Heart right ventricle (tissue), 16 donors: ENCODE measurements at regions of chr14 and their contacts with region 1.

Region 1: DNA sequence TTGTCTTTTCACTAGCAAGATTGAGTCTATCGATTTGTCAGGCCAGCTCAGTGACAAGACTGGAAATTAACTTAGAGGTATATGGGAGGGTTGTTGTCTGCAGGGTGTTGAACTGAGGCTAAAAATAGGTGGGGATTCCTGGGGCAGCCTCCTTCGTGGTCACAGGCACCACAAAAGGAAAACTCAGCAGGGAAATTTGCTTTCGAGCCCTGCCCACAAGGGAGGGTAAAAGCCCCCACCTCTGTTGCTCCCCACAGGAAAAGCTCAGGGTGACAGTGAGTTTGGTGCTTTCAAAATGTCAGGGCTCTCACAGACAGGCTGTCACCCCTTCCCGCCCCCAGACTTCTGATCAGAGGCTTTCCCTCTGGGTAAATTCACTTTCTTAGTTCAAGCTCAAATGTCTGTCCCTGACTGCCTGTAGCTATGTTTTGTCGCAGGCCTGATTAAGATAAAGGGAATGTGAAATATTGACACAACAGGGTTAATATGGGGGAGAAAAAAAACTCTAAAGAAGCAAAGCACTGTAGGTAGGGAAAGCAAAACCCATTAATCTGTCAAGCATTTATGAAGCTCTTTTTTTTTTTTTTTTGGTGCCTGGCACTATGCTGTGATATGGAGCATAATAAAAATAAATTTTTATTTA is 11.7 kb upstream of the NFKBIA start:
- DNase-seq: no peak
- ATAC-seq: no peak
- H3K4me3 ChIP-seq: no peak overlapping the region
- H3K27ac ChIP-seq: peak overlapping the region in 4 of 10 donors; percentile 23 to 75 (median 32)
- H3K4me1 ChIP-seq: peaks cover 4 to 49% (median 36%) of the 10 kb centered on the region in 9 donors
- H3K27me3 ChIP-seq: no peaks in the 10 kb centered on the region
- CTCF ChIP-seq: no peak

Region 2: GRCh38 chr14:34331728-34332623 is 1084.3 kb before region 1 on chr14:
- intact Hi-C with region 1: loop called in 1 of 10 experiments (anchors 10 kb)
- DNase-seq: peak; percentile 43 to 48
- ATAC-seq: peak; percentile 67 to 85 (median 76)
- H3K4me3 ChIP-seq: no peak overlapping the region
- H3K27ac ChIP-seq: no peak overlapping the region
- H3K4me1 ChIP-seq: peaks cover 0 to 19% (median 0%) of the 10 kb centered on the region in 9 donors
- H3K27me3 ChIP-seq: no peaks in the 10 kb centered on the region
- CTCF ChIP-seq: peak; percentile 67 to 83 (median 77)

Region 3: DNA sequence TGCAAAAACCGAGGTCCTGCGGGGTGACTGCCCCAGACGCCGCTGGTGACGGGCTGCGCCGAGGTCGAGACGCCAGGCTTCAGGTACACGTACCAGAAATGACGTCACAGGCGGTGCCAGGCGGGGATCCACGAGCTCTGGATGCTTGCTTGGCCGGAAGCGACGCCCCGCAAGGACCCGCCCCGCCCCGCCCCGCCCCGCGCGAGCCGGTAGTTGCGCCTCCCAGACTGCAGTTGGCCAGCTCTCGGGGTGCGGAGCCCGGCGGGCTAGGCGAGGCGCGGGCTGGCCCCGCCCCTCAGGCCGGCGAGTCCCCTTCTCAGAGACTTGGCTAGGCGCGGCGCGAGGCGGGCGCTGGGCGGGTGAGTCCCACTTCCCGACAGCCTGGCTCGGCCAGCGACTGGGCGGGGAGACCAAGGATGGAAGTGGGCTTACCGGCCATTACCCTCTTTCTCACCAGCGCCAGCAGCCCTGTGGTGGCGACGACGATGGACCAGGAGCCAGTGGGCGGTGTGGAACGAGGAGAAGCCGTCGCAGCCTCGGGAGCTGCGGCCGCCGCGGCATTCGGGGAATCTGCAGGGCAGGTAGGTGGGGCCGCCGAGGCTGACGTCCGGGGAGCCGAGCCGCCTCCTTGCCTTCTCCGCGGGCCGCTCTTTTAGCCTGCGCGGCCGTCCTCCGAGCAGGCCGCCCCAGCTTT is 370.0 kb before region 1 on chr14 and contains the start of gene FAM177A1:
- intact Hi-C with region 1: loop called in 3 of 10 experiments (anchors 5 to 10 kb)
- DNase-seq: peak; percentile 98 to 99
- ATAC-seq: peak; percentile 97 to 99 (median 98)
- H3K4me3 ChIP-seq: peak within 1 kb of the TSS; percentile 66 to 96 (median 81)
- H3K27ac ChIP-seq: peak within 1 kb of the TSS; percentile 92 to 99 (median 96)
- H3K4me1 ChIP-seq: peaks cover 4 to 53% (median 33%) of the 10 kb centered on the region in 9 donors
- H3K27me3 ChIP-seq: no peaks in the 10 kb centered on the region
- CTCF ChIP-seq: no peak
- total RNA-seq, gene FAM177A1: 68.1 to 122 (median 104) TPM

Region 4: DNA sequence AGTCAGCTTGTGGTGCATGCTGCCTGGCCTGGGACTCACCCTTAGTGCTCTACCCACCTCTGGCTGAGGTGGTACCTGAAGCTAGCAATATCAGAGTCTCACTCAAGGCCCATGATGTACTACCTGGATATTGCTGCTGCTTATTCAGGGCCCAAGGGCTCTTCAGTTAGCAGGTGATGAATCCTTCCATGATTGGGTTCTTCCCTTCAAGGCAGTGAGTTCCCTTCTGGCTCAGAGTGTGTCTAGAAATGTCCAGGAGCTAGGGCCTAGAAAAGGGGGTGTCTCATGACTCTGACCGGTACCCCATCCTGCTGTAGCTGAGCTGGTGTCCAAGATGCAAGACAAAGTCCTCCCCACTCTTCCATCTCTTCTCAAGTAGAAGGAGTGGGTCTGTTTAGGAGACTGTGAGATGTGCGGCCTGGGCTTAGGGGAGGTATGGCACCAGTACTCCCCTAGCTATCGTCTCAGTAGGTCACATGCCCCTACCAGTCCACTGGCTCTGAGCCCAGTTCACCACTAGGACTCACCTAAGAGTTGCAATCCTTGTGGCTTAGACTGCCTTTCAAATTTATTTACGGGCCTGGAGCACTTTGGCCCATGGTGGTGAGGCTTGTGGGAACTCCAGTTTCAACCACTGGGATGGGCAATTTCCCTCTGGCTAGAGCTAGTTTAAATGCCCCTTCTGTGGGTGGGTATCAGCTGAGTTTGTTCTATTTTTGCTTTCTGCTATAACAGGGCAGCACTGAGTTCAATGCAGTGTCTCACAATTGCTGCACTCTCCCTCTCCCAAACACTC is 281.7 kb before region 1 on chr14:
- intact Hi-C with region 1: loop called in 4 of 10 experiments (anchors 2 to 5 kb)
- DNase-seq: no peak
- ATAC-seq: peak in 5 of 8 donors; percentile 22 to 64 (median 50)
- H3K4me3 ChIP-seq: no peak overlapping the region
- H3K27ac ChIP-seq: no peak overlapping the region
- H3K4me1 ChIP-seq: peaks cover 0 to 12% (median 7%) of the 10 kb centered on the region in 9 donors
- H3K27me3 ChIP-seq: no peaks in the 10 kb centered on the region
- CTCF ChIP-seq: no peak

Region 5: DNA sequence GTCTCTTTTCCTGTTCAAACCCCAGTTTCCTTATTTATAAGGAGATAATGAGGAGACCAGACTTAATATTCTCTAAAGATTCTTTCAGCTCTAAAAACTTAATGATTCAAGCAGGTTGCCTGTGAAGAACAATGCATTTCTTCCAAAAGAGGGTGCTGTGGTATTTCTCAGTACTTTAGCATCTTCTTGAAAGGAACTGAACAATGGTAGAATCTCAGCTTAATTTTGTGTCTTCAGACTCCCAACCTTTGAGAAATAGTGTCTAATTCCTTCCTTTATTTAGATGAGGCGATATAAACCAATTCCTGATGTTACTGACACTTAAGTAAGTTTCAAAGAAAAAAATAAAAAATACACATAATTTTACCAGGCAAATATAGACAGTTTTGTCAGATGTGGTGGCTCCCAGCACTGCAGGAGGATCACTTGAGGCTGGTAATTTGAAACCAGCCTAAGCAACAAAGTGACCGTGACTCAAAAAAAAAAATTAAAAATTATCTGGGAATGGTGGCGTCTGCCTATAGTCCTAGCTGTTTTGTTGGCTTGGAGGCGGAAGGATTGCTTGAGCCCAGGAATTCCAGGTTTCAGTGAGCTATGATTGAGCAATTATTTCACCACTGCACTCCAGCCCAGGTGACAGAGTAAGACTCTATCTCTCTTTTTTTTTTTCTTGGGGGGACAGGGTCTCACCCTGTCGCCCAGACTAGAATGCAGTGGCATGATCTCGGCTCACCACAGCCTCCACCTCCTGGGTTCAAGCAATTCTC is 200.9 kb before region 1 on chr14:
- intact Hi-C with region 1: loop called in 8 of 10 experiments (anchors 1 to 10 kb)
- DNase-seq: peak in 1 of 2 donors; percentile 6
- ATAC-seq: peak in 5 of 8 donors; percentile 52 to 77 (median 64)
- H3K4me3 ChIP-seq: no peak overlapping the region
- H3K27ac ChIP-seq: peak overlapping the region in 4 of 10 donors; percentile 0 to 48 (median 29)
- H3K4me1 ChIP-seq: peaks cover 0 to 20% (median 0%) of the 10 kb centered on the region in 9 donors
- H3K27me3 ChIP-seq: no peaks in the 10 kb centered on the region
- CTCF ChIP-seq: peak; percentile 28 to 78 (median 56)

Region 6: GRCh38 chr14:35229495-35230089 is 186.6 kb before region 1 on chr14:
- intact Hi-C with region 1: loop called in 4 of 10 experiments (anchors 5 to 10 kb)
- DNase-seq: no peak
- ATAC-seq: no peak
- H3K4me3 ChIP-seq: no peak overlapping the region
- H3K27ac ChIP-seq: no peak overlapping the region
- H3K4me1 ChIP-seq: peaks cover 0 to 31% (median 4%) of the 10 kb centered on the region in 9 donors
- H3K27me3 ChIP-seq: no peaks in the 10 kb centered on the region
- CTCF ChIP-seq: peak in 8 of 9 donors; percentile 22 to 51 (median 40)

Region 7: DNA sequence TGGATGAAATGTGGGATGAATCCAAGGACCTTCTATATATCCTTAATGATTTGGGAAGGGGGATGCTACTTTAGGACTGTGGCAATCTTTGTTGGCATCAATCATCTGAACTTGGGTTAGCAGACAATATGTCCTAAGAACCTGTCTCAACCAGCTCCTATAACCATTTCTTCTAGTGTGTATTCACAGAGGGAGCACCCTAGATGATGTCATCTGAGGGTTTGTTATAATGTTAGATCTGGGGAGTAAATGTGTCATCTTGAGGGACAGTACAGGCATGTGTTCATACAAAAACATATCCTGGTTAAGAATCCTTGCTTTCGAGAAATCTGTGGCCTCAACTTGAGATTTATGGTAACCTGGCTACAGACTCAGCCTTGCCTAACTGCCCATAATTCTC is 30.2 kb after region 1 on chr14:
- intact Hi-C with region 1: no loop called
- DNase-seq: no peak
- ATAC-seq: no peak
- H3K4me3 ChIP-seq: no peak overlapping the region
- H3K27ac ChIP-seq: no peak overlapping the region
- H3K4me1 ChIP-seq: no peaks in the 10 kb centered on the region
- H3K27me3 ChIP-seq: no peaks in the 10 kb centered on the region
- CTCF ChIP-seq: no peak